ENCODE measurements at regions of chr3 and their contacts with region 1.

Region 1: GRCh38 chr3:19822805-19823204 is 111.2 kb downstream of the EFHB start:
- DNase-seq: no peak
- H3K4me3 ChIP-seq: no peak overlapping the region
- H3K27ac ChIP-seq: no peak overlapping the region
- H3K4me1 ChIP-seq: no peaks in the 10 kb centered on the region
- H3K27me3 ChIP-seq: no peaks in the 10 kb centered on the region
- CTCF ChIP-seq: no peak

Region 2: GRCh38 chr3:19799887-19800286 is 22.9 kb before region 1 on chr3:
- CTCF ChIA-PET with region 1: no interaction called
- dilution Hi-C with region 1: no loop called
- in situ Hi-C with region 1: no loop called
- intact Hi-C with region 1: loop called (anchors 2 kb)
- DNase-seq: no peak
- H3K4me3 ChIP-seq: no peak overlapping the region
- H3K27ac ChIP-seq: no peak overlapping the region
- H3K4me1 ChIP-seq: no peaks in the 10 kb centered on the region
- H3K27me3 ChIP-seq: no peaks in the 10 kb centered on the region
- CTCF ChIP-seq: no peak

Region 3: GRCh38 chr3:19946832-19947548 is 124.2 kb after region 1 on chr3 and contains the start of gene RAB5A:
- CTCF ChIA-PET with region 1: no interaction called
- dilution Hi-C with region 1: no loop called
- in situ Hi-C with region 1: no loop called
- intact Hi-C with region 1: no loop called
- DNase-seq: peak; percentile 99
- H3K4me3 ChIP-seq: peak within 1 kb of the TSS; percentile 66 to 99 (median 97)
- H3K27ac ChIP-seq: peak within 1 kb of the TSS; percentile 83
- H3K4me1 ChIP-seq: peaks cover 22% of the 10 kb centered on the region
- H3K27me3 ChIP-seq: no peaks in the 10 kb centered on the region
- CTCF ChIP-seq: no peak
- total RNA-seq, gene RAB5A: 68.3 to 76.3 TPM

Measured in mammary epithelial cell (primary cell).